HCT116 (cell line): ENCODE measurements at regions of chr10 and their contacts with region 1.

Region 1: GRCh38 chr10:113521123-113521795 is 31.6 kb upstream of the HABP2 start:
- DNase-seq: peak; percentile 75
- ATAC-seq: peak; percentile 90
- H3K4me3 ChIP-seq: no peak overlapping the region
- H3K27ac ChIP-seq: no peak overlapping the region
- H3K4me1 ChIP-seq: peaks cover 9 to 11% of the 10 kb centered on the region in 2 experiments; a peak in 3 of 4 replicates
- H3K27me3 ChIP-seq: no peaks in the 10 kb centered on the region
- CTCF ChIP-seq: peak; percentile 91 to 100 (median 100)
- POLR2A ChIP-seq: no peak
- RAD21 ChIP-seq: peak; percentile 99

Region 2: DNA sequence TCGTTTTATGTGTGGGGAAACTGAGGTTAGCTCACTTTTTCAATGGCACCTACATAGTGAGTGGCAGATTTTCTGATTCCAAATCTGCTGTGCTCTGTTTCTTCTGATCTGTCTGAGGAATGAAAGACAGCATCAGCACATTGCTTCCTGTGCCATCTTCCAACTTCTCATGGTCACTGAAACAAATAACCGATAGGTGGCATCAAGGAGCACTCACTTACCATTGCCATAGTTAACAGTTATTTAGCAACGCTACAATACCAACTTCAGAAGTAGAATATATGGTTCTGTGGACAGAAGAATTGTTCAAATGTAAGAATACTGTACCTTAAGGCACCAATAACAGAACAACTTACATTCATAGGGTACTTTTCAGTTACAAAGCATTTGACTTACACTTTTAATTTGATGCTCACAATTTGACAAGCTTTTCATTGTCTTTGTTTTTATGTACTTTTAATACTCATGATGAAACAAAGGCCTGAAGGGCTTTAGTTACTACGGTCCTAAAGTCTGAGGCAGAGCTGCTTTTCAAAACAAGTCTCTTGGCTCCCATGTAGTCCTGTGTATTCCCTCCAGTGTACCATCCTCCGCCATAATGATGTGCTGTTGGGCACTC is 800.1 kb before region 1 on chr10:
- CTCF ChIA-PET with region 1: no interaction called
- POLR2A ChIA-PET with region 1: no interaction called
- RAD21 ChIA-PET with region 1: no interaction called
- intact Hi-C with region 1: loop called (anchors 5 kb)
- DNase-seq: peak; percentile 51
- ATAC-seq: peak; percentile 82
- H3K4me3 ChIP-seq: no peak overlapping the region
- H3K27ac ChIP-seq: no peak overlapping the region
- H3K4me1 ChIP-seq: peaks cover 14 to 21% of the 10 kb centered on the region in 2 experiments
- H3K27me3 ChIP-seq: no peaks in the 10 kb centered on the region
- CTCF ChIP-seq: peak; percentile 39 to 82 (median 80); a peak in 5 of 6 replicates
- POLR2A ChIP-seq: no peak
- RAD21 ChIP-seq: peak; percentile 74

Region 3: DNA sequence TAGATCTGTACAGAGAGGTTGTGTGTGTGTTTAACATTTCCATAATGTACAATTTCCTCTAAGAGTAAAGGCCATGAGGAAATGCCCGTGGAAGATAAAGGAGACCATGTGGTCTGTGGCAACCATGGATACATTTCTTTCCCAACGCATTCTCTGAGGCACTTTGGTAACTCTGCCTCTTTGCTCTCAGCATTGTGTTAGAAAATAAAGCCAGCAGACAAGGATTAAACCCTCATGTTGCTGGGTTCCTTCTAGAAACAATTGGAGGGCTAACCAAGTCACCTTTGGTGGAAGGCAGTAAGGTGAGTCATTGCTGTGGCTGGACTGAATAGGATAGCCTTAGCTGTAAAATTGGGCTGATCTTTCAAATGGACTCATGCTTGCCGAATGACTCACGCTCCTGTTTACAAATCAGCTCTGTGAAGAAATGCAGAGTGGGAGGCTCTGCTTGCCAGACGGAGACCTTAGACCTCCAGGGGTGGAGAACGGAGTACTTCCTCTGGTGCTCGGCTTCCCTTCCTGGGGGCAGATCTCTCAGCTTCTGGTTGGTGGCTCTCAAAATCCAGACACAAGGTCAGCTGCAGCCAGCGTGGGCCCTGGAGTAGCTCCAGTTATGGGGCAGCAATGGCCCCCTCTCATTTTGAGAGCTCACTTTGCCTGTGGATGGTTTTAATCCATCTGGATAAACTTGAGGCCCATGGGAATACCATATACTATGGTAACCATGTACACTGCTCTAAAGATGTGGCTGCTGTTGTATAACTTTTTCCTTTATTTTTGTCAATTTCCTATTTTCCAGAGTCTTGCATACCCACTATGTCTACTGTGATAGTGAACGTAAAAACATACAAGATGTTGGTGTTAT is 433.9 kb before region 1 on chr10:
- CTCF ChIA-PET with region 1: no interaction called
- POLR2A ChIA-PET with region 1: no interaction called
- RAD21 ChIA-PET with region 1: no interaction called
- intact Hi-C with region 1: loop called (anchors 1 kb)
- DNase-seq: peak; percentile 100
- ATAC-seq: peak; percentile 92
- H3K4me3 ChIP-seq: peak overlapping the region in 1 of 2 experiments; percentile 30; a peak in 2 of 4 replicates
- H3K27ac ChIP-seq: peak overlapping the region; percentile 92
- H3K4me1 ChIP-seq: peaks cover 93 to 95% of the 10 kb centered on the region in 2 experiments
- H3K27me3 ChIP-seq: no peaks in the 10 kb centered on the region
- CTCF ChIP-seq: no peak
- POLR2A ChIP-seq: no peak
- RAD21 ChIP-seq: no peak

Region 4: DNA sequence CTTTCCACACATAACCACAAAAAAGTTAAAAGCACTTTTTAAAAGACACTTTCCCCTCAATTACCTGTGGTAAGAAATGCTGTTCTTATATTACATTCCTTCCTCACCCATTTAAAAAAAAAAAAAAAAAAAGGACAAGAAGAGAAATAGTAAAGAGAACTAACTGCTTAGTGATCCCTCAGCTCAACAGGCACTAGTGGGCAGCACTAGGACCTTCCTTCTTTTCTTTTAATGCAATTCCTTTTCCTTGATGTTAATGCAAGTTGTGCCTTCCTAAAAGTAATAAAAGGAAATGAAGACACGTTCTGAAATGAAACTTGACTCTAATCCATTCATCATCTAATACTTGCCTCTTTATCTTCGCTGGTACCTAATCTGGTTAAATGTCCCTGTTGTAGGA is 381.6 kb before region 1 on chr10:
- CTCF ChIA-PET with region 1: no interaction called
- POLR2A ChIA-PET with region 1: no interaction called
- RAD21 ChIA-PET with region 1: no interaction called
- intact Hi-C with region 1: loop called (anchors 10 kb)
- DNase-seq: no peak
- ATAC-seq: no peak
- H3K4me3 ChIP-seq: no peak overlapping the region
- H3K27ac ChIP-seq: no peak overlapping the region
- H3K4me1 ChIP-seq: peaks cover 5 to 8% of the 10 kb centered on the region in 2 experiments; a peak in 2 of 4 replicates
- H3K27me3 ChIP-seq: no peaks in the 10 kb centered on the region
- CTCF ChIP-seq: peak; percentile 16 to 40 (median 37); a peak in 3 of 6 replicates
- POLR2A ChIP-seq: no peak
- RAD21 ChIP-seq: peak; percentile 28; the same call in 1 of the 2 replicates

Region 5: DNA sequence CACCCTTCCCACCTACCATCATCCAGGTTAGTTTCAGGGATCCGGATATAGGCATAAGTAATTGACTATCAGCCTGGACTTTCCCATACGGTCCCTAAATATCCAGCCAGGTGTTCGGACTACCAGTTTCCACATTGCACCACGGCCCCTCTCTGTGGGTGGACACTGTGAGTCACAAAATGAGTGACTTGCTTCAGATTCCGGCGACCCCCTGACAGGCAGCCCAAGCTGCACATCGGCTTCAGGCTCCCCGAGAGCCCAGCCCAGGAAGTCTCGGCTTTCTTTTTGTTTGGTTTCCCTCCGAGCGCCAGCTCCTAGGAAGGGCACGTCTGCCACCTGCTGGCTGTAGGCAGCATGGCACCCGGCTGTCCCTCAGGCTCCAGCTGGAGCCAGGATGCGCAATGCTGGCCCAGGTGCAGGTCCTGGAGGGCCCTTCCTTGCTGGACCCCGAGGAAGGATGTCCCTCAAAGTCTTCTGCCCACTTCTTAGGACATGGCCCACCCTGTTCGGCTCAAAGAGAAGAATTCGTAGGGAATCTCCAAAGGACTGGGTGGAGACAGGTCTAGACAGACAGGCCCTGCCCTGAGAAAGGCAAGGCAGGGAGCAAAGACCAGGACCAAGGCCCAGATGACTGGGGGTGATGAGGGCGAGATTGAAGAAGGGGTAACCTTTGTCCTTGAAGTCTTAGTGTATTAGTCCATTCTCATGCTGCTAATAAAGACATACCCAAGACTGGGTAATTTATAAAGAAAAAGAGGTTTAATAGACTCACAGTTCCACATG is 42.2 kb after region 1 on chr10:
- CTCF ChIA-PET with region 1: interaction called, 7 read pairs
- POLR2A ChIA-PET with region 1: no interaction called
- RAD21 ChIA-PET with region 1: no interaction called
- intact Hi-C with region 1: loop called (anchors 1 kb)
- DNase-seq: peak; percentile 52
- ATAC-seq: peak; percentile 97
- H3K4me3 ChIP-seq: peak overlapping the region; percentile 44 to 54
- H3K27ac ChIP-seq: no peak overlapping the region
- H3K4me1 ChIP-seq: peaks cover 5 to 6% of the 10 kb centered on the region in 2 experiments; a peak in 3 of 4 replicates
- H3K27me3 ChIP-seq: no peaks in the 10 kb centered on the region
- CTCF ChIP-seq: peak; percentile 89 to 100 (median 100)
- POLR2A ChIP-seq: no peak
- RAD21 ChIP-seq: peak; percentile 98